ENCODE measurements at regions of chr6 and their contacts with region 1.

Region 1: DNA sequence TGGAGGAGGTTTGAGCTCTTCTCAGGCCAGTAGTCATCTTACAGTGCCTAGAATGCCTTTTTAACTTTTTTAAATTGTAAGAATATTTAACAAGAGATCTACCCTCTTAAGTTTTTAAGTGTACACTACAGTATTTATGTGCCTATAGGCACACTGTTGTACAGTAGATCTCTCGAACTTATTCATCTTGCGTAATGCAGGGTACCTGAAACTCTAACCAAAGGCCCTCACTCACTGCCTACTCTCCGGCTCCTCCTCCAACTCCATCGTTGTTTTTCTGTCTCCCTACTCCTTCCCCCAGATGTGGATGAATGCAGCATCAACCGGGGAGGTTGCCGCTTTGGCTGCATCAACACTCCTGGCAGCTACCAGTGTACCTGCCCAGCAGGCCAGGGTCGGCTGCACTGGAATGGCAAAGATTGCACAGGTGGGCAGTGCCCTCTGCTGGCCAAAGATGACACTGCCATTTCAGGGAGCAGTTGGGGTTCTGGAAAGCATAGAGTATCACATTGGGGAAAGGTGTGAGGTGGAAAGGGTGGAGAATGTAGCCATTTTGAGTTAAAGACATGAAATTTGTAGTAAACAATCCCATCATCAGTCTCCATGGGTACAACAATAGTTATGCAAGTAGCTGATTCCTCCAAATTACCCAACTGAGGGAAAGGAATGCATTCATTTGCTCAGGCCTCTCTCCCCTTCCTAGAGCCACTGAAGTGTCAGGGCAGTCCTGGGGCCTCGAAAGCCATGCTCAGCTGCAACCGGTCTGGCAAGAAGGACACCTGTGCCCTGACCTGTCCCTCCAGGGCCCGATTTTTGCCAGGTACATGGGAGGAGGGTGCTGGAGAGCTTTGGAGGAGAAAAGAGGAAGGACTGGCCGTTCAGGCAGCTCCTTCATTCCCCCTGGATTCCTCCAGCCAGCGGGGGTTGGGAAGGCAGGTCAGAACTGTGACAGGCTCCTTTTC is 18.4 kb upstream of the ZNF76 start:
- DNase-seq: peak; percentile 93
- H3K4me3 Mint-ChIP-seq: no peak overlapping the region
- H3K27ac Mint-ChIP-seq: peak overlapping the region; percentile 15
- H3K4me1 Mint-ChIP-seq: peaks cover 9% of the 10 kb centered on the region
- H3K27me3 Mint-ChIP-seq: no peaks in the 10 kb centered on the region
- CTCF ChIP-seq: peak; percentile 99

Region 2: GRCh38 chr6:34922177-34922663 is 318.9 kb before region 1 on chr6:
- CTCF ChIA-PET with region 1: no interaction called
- intact Hi-C with region 1: no loop called
- DNase-seq: no peak
- H3K4me3 Mint-ChIP-seq: no peak overlapping the region
- H3K27ac Mint-ChIP-seq: no peak overlapping the region
- H3K4me1 Mint-ChIP-seq: peaks cover 27% of the 10 kb centered on the region
- H3K27me3 Mint-ChIP-seq: no peaks in the 10 kb centered on the region
- CTCF ChIP-seq: no peak

Region 3: DNA sequence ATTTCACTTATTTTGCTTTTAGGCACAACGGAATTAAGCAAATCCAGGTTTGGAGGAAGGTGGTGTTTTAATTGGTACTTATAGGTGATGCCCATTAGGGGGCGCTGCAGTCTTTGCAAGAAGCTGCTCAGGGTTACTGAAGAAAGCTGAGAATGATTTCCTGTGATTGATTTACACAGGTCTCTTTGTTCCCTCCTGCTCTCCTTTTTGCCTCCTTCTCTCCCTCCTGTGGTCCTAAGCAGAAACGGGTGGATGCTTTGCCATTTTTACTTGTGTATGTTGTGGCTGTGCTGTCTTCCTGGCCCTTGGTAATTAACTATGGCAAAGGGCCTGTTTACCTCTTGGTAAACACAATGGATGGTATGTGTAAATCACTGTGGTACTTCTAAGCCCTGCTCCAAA is 254.3 kb before region 1 on chr6:
- CTCF ChIA-PET with region 1: interaction called, 9 read pairs
- intact Hi-C with region 1: loop called (anchors 1 kb)
- DNase-seq: peak; percentile 81
- H3K4me3 Mint-ChIP-seq: no peak overlapping the region
- H3K27ac Mint-ChIP-seq: no peak overlapping the region
- H3K4me1 Mint-ChIP-seq: no peaks in the 10 kb centered on the region
- H3K27me3 Mint-ChIP-seq: no peaks in the 10 kb centered on the region
- CTCF ChIP-seq: peak; percentile 90

Region 4: DNA sequence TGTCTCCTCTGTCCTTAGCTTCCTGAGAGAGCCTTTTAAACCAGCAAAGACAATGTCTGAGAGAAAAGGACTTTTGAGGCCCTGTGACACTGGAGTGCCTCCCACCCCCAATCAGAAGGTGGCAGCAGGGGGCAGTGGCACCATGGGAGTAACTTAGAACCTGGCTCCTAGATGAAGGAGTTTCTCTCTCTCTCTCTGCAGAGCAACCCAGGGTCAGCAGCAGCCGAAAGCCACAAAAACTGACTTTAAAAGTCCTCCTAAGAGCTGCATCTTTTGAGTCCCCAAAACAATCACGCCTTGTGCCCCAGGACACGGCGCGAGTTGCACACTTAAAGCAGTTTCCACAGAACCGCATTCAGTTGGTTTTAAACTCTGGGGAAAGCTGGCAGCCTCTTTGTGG is 94.7 kb before region 1 on chr6:
- CTCF ChIA-PET with region 1: interaction called, 30 read pairs
- intact Hi-C with region 1: loop called (anchors 1 kb)
- DNase-seq: peak; percentile 81
- H3K4me3 Mint-ChIP-seq: no peak overlapping the region
- H3K27ac Mint-ChIP-seq: no peak overlapping the region
- H3K4me1 Mint-ChIP-seq: peaks cover 51% of the 10 kb centered on the region
- H3K27me3 Mint-ChIP-seq: no peaks in the 10 kb centered on the region
- CTCF ChIP-seq: peak; percentile 86

Region 5: GRCh38 chr6:35209081-35209480 is 32.0 kb before region 1 on chr6:
- CTCF ChIA-PET with region 1: interaction called, 13 read pairs
- intact Hi-C with region 1: loop called (anchors 5 kb)
- DNase-seq: no peak
- H3K4me3 Mint-ChIP-seq: no peak overlapping the region
- H3K27ac Mint-ChIP-seq: no peak overlapping the region
- H3K4me1 Mint-ChIP-seq: peaks cover 11% of the 10 kb centered on the region
- H3K27me3 Mint-ChIP-seq: peaks cover 95% of the 10 kb centered on the region
- CTCF ChIP-seq: no peak

Region 6: GRCh38 chr6:35230950-35231349 is 10.2 kb before region 1 on chr6:
- CTCF ChIA-PET with region 1: interaction called, 26 read pairs
- intact Hi-C with region 1: no loop called
- DNase-seq: no peak
- H3K4me3 Mint-ChIP-seq: no peak overlapping the region
- H3K27ac Mint-ChIP-seq: no peak overlapping the region
- H3K4me1 Mint-ChIP-seq: no peaks in the 10 kb centered on the region
- H3K27me3 Mint-ChIP-seq: no peaks in the 10 kb centered on the region
- CTCF ChIP-seq: no peak

Region 7: DNA sequence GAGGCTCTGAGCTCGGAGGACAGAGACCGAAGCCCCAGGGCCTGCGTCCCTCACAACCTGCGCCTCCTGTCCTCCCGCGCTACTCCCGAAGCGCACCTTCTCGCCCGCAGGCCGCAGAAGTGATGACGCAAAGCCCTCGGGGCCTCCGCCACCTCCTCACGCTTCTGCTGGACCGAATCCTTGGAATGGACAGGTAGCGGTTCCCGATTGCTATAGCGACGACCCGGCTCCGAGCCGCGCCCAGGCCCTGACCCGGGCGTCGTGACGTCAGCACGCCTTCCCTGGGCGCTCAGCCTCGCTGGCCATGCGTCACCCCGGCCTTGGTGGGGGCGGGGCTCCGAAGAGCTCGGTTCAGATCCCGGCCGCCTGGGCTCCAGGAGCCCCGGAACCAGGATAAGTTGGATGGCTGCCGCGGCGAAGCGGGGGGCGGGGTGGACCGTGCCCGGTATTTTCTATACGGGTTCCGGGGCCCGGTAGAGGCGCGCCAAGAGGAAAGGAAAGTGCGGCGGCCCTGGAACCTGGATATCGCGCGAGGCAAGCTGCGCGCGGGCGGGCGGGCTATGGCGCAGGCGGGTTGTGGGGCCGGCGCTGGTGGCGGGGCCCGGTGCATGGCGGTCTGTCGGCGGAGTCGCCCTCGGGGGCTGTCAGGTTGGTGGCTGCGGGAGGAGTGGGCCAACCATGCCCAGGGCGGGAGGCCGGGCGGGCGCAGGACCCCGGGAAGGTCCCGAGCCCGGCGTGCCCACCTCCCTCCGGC is 18.2 kb after region 1 on chr6 and contains the start of gene ZNF76:
- CTCF ChIA-PET with region 1: interaction called, 11 read pairs
- intact Hi-C with region 1: no loop called
- DNase-seq: peak; percentile 100
- H3K4me3 Mint-ChIP-seq: peak within 1 kb of the TSS; percentile 98
- H3K27ac Mint-ChIP-seq: peak within 1 kb of the TSS; percentile 99
- H3K4me1 Mint-ChIP-seq: peaks cover 39% of the 10 kb centered on the region
- H3K27me3 Mint-ChIP-seq: no peaks in the 10 kb centered on the region
- CTCF ChIP-seq: no peak
- total RNA-seq, gene ZNF76: 52.0 and 60.0 TPM in 2 replicates

Measured in Calu3 (cell line).